ENCODE measurements at regions of chr1 and their contacts with region 1.

Region 1: GRCh38 chr1:208476340-208477041 is 232.3 kb upstream of the PLXNA2 start:
- DNase-seq: no peak
- H3K4me3 ChIP-seq: no peak overlapping the region
- H3K27ac ChIP-seq: peak overlapping the region; percentile 41 to 49
- H3K4me1 ChIP-seq: no peaks in the 10 kb centered on the region
- H3K27me3 ChIP-seq: no peaks in the 10 kb centered on the region
- CTCF ChIP-seq: no peak
- POLR2A ChIP-seq: no peak

Region 2: GRCh38 chr1:208461680-208462079 is 14.8 kb before region 1 on chr1:
- intact Hi-C with region 1: loop called (anchors 1 kb)
- DNase-seq: no peak
- H3K4me3 ChIP-seq: no peak overlapping the region
- H3K27ac ChIP-seq: no peak overlapping the region
- H3K4me1 ChIP-seq: no peaks in the 10 kb centered on the region
- H3K27me3 ChIP-seq: no peaks in the 10 kb centered on the region
- CTCF ChIP-seq: no peak
- POLR2A ChIP-seq: no peak

Measured in breast epithelium (tissue), 4 donors.